H1 (cell line): ENCODE measurements at regions of chr11 and their contacts with region 1.

Region 1: GRCh38 chr11:113431746-113432145 is 43.5 kb downstream of the DRD2 start:
- DNase-seq: no peak
- H3K4me3 ChIP-seq: no peak overlapping the region
- H3K27ac ChIP-seq: no peak overlapping the region
- H3K4me1 ChIP-seq: peaks cover 0 to 8% (median 1%) of the 10 kb centered on the region in 4 experiments; a peak in 3 of 7 replicates
- H3K27me3 ChIP-seq: no peaks in the 10 kb centered on the region; a peak in 1 of 7 replicates
- CTCF ChIP-seq: no peak
- EP300 ChIP-seq: no peak
- POLR2A ChIP-seq: no peak
- RAD21 ChIP-seq: no peak

Region 2: DNA sequence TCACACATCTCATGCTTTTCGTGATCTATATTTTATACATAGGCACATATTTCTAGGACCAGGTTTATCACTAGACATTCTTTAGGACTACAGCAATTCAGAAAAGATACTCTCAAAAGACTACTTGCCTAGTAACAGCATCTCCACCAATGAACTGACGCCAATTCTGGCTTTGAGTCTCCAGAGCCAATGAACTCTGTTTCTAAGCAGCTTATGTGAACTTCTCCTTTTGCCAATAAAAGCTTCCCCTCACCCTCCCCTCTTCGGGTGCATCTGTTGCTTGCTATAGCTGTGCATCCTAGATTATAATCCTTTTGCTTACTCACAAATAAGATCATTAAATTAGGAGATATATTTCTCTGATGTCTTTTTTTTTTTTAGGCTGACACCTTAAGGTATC is 55.6 kb before region 1 on chr11:
- CTCF ChIA-PET with region 1: no interaction called
- POLR2A ChIA-PET with region 1: no interaction called
- DNase-seq: no peak
- H3K4me3 ChIP-seq: no peak overlapping the region
- H3K27ac ChIP-seq: no peak overlapping the region
- H3K4me1 ChIP-seq: peaks cover 0 to 2% (median 0%) of the 10 kb centered on the region in 4 experiments; a peak in 1 of 7 replicates
- H3K27me3 ChIP-seq: no peaks in the 10 kb centered on the region
- CTCF ChIP-seq: no peak
- EP300 ChIP-seq: no peak
- POLR2A ChIP-seq: no peak
- RAD21 ChIP-seq: no peak

Region 3: GRCh38 chr11:113419454-113420003 is 12.2 kb before region 1 on chr11:
- CTCF ChIA-PET with region 1: interaction called, 13 read pairs
- POLR2A ChIA-PET with region 1: interaction called, 3 read pairs
- DNase-seq: no peak
- H3K4me3 ChIP-seq: no peak overlapping the region
- H3K27ac ChIP-seq: no peak overlapping the region
- H3K4me1 ChIP-seq: no peaks in the 10 kb centered on the region
- H3K27me3 ChIP-seq: no peaks in the 10 kb centered on the region
- CTCF ChIP-seq: no peak
- EP300 ChIP-seq: no peak
- POLR2A ChIP-seq: no peak
- RAD21 ChIP-seq: no peak

Region 4: GRCh38 chr11:113481672-113482071 is 49.9 kb after region 1 on chr11:
- CTCF ChIA-PET with region 1: no interaction called
- POLR2A ChIA-PET with region 1: no interaction called
- DNase-seq: no peak
- H3K4me3 ChIP-seq: no peak overlapping the region
- H3K27ac ChIP-seq: no peak overlapping the region
- H3K4me1 ChIP-seq: no peaks in the 10 kb centered on the region
- H3K27me3 ChIP-seq: peaks cover 0 to 6% (median 2%) of the 10 kb centered on the region in 4 experiments; a peak in 5 of 7 replicates
- CTCF ChIP-seq: no peak
- EP300 ChIP-seq: no peak
- POLR2A ChIP-seq: no peak
- RAD21 ChIP-seq: no peak

Region 5: GRCh38 chr11:113494021-113494420 is 62.3 kb after region 1 on chr11:
- CTCF ChIA-PET with region 1: no interaction called
- POLR2A ChIA-PET with region 1: no interaction called
- DNase-seq: no peak
- H3K4me3 ChIP-seq: no peak overlapping the region
- H3K27ac ChIP-seq: no peak overlapping the region
- H3K4me1 ChIP-seq: no peaks in the 10 kb centered on the region
- H3K27me3 ChIP-seq: no peaks in the 10 kb centered on the region; a peak in 2 of 7 replicates
- CTCF ChIP-seq: no peak
- EP300 ChIP-seq: no peak
- POLR2A ChIP-seq: no peak
- RAD21 ChIP-seq: no peak